Panc1 (cell line): ENCODE measurements at regions of chr13 and their contacts with region 1.

Region 1: GRCh38 chr13:109145631-109146030 is 516.2 kb downstream of the MYO16 start:
- DNase-seq: peak; percentile 46
- ATAC-seq: peak; percentile 78
- H3K4me3 ChIP-seq: no peak overlapping the region
- H3K27ac ChIP-seq: peak overlapping the region; percentile 91
- H3K4me1 ChIP-seq: peaks cover 32% of the 10 kb centered on the region
- H3K27me3 ChIP-seq: no peaks in the 10 kb centered on the region
- CTCF ChIP-seq: peak; percentile 75

Region 2: GRCh38 chr13:108980237-108980636 is 165.4 kb before region 1 on chr13:
- CTCF ChIA-PET with region 1: no interaction called
- POLR2A ChIA-PET with region 1: no interaction called
- in situ Hi-C with region 1: no loop called
- intact Hi-C with region 1: no loop called
- DNase-seq: no peak
- ATAC-seq: no peak
- H3K4me3 ChIP-seq: no peak overlapping the region
- H3K27ac ChIP-seq: no peak overlapping the region
- H3K4me1 ChIP-seq: no peaks in the 10 kb centered on the region
- H3K27me3 ChIP-seq: no peaks in the 10 kb centered on the region
- CTCF ChIP-seq: no peak

Region 3: DNA sequence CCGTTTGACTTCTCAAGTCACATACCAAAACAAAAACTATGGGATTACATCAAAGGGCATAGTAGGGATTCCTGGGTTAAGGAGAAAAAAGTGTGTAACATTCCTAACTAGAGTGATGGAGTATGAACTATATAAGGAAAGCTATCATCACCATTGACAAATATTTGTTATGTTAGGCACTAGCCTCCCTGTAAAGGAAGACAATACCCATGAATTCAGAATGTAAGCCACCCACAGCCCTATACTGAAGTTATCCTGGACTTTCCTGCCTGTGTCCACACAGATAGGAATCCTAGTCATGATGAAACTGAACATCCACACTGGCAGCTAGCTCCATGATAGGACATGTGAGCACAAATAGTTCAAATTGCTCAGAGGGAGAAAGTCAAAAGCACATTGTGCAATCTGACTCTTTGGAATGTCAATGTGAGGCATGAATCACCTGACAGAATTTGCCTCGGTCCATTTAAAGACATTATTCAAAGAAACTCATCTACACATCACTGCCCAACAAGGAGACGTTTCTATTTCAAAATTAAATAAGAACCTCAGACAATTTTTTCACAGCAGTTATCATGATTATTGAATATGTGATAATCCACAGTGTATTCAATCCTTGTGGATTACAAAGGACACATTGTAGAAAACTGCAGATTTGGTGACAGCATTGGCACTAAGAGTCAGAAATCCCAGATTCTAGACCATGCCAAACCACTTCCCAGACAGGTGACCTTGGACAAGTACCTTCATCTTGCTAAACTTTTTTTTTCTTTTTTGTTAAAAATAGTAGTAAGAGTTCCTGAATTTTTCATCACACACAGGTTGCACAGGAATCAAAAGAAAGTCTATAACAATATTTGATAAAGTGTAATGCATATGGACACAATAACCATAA is 111.5 kb after region 1 on chr13:
- CTCF ChIA-PET with region 1: no interaction called
- POLR2A ChIA-PET with region 1: no interaction called
- in situ Hi-C with region 1: no loop called
- intact Hi-C with region 1: loop called (anchors 5 kb)
- DNase-seq: peak; percentile 87
- ATAC-seq: peak; percentile 87
- H3K4me3 ChIP-seq: peak overlapping the region in 1 of 2 experiments; percentile 23; a peak in 2 of 4 replicates
- H3K27ac ChIP-seq: peak overlapping the region; percentile 92
- H3K4me1 ChIP-seq: peaks cover 32% of the 10 kb centered on the region
- H3K27me3 ChIP-seq: no peaks in the 10 kb centered on the region
- CTCF ChIP-seq: no peak

Region 4: GRCh38 chr13:109454167-109454917 is 308.7 kb after region 1 on chr13:
- CTCF ChIA-PET with region 1: no interaction called
- POLR2A ChIA-PET with region 1: no interaction called
- in situ Hi-C with region 1: no loop called
- intact Hi-C with region 1: no loop called
- DNase-seq: no peak
- ATAC-seq: no peak
- H3K4me3 ChIP-seq: no peak overlapping the region
- H3K27ac ChIP-seq: no peak overlapping the region
- H3K4me1 ChIP-seq: no peaks in the 10 kb centered on the region
- H3K27me3 ChIP-seq: no peaks in the 10 kb centered on the region
- CTCF ChIP-seq: no peak